ENCODE measurements at regions of chr5 and their contacts with region 1.

Region 1: DNA sequence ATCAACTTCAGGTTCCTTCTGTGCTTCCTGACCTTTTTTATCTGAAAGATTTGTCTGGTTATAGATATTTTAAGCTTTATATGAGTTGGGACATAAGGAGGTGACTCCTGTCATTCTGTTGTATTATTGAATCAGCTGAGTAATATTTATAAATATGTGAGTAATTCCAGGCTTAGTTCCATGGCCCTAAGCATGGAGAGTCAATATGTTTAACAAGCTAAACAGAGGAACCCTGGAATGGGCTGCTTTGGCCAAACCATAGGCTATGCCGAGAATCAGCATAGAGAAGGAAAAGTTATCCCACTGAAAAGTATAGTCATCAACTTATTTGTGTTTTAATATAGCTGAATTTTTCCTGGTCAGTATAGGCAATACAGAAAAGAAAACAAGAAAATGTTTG is 7.2 kb upstream of the EIF4EBP3 start:
- DNase-seq: no peak
- H3K4me3 ChIP-seq: no peak overlapping the region
- H3K27ac ChIP-seq: no peak overlapping the region
- H3K4me1 ChIP-seq: peaks cover 7% of the 10 kb centered on the region
- H3K27me3 ChIP-seq: no peaks in the 10 kb centered on the region
- CTCF ChIP-seq: no peak
- POLR2A ChIP-seq: no peak

Region 2: GRCh38 chr5:140564196-140565023 is 24.2 kb after region 1 on chr5 and contains the starts of genes APBB3 and SLC35A4:
- CTCF ChIA-PET with region 1: no interaction called
- POLR2A ChIA-PET with region 1: no interaction called
- dilution Hi-C with region 1: no loop called
- intact Hi-C with region 1: loop called (anchors 2 kb)
- DNase-seq: peak; percentile 97
- H3K4me3 ChIP-seq: peak within 1 kb of the TSS; percentile 49 to 84 (median 73)
- H3K27ac ChIP-seq: peak within 1 kb of the TSS; percentile 65
- H3K4me1 ChIP-seq: peaks cover 8% of the 10 kb centered on the region
- H3K27me3 ChIP-seq: no peaks in the 10 kb centered on the region
- CTCF ChIP-seq: no peak
- POLR2A ChIP-seq: peak; percentile 83
- total RNA-seq, gene APBB3: 12.1 and 13.3 TPM in 2 replicates
- total RNA-seq, gene SLC35A4: 60.9 and 65.6 TPM in 2 replicates